ENCODE measurements at regions of chr13 and their contacts with region 1.

Region 1: DNA sequence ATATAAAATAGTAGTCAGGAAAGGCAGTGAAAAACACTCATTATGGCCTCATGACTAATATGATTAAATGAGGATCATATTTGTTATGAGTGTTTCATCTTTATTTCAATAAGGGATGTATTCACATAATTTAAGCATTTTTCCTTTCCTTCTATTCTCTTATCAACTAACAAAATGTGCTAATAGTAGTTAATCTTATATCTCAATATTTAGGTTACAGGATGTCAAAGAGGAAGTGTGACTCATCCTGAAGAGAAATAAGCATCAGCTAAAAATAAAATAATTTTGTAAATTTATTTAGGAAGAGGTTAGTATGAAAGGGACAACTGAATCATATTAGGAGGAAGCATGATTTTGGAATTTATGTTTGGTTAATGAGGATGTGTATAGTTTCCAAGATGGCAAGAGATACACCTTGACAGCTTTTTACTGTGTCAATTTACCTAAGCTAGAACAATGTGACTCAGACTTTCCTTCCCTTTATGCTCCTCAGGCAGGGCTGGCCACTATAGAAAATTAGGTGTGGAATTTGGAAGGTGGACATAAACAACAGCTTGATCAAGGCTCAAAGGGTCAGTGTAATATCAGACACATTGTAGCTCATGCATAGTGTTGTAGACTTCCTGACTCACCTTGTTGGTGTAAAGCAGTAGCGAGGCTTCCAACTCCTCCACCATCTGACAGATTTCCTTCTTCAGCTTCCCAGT is 172.7 kb downstream of the SLITRK1 start:
- DNase-seq: no peak
- ATAC-seq: no peak
- H3K4me3 ChIP-seq: no peak overlapping the region
- H3K27ac ChIP-seq: no peak overlapping the region
- H3K4me1 ChIP-seq: no peaks in the 10 kb centered on the region
- H3K27me3 ChIP-seq: no peaks in the 10 kb centered on the region
- CTCF ChIP-seq: no peak

Region 2: DNA sequence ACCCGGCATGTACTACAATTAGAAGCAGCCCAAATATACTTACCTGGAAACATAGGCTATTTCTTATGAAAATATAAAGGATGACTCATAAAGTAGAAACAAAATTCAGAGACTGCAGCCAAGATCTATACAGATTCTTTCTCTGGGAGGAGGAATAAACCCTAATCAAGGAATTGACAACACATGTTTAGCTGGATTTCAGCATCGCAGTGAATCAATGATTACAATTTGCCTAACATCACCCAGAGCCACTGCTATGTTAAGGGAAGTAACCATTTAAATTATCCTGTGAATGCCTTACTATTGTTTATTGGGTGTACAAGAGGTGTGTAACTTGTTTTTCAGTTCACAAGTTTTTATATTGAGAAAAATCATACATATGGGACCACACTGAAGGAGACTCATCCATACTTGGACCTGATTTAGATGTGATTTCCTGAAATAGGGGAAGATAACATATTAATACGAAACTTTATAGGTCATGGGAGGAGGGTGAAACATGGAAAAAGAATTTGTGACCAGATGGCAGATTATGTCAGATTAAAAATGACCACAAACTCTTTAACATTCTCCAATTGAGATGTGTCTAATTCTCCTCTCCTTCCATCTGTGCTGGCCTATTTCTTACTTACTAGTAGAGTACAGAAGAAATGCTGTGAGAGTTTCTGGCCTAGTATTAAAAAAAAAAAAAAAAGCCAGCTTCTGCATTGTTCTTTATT is 995.7 kb before region 1 on chr13:
- CTCF ChIA-PET with region 1: no interaction called
- POLR2A ChIA-PET with region 1: no interaction called
- in situ Hi-C with region 1: no loop called
- intact Hi-C with region 1: no loop called
- DNase-seq: no peak
- ATAC-seq: no peak
- H3K4me3 ChIP-seq: no peak overlapping the region
- H3K27ac ChIP-seq: no peak overlapping the region
- H3K4me1 ChIP-seq: no peaks in the 10 kb centered on the region
- H3K27me3 ChIP-seq: no peaks in the 10 kb centered on the region
- CTCF ChIP-seq: no peak

Region 3: DNA sequence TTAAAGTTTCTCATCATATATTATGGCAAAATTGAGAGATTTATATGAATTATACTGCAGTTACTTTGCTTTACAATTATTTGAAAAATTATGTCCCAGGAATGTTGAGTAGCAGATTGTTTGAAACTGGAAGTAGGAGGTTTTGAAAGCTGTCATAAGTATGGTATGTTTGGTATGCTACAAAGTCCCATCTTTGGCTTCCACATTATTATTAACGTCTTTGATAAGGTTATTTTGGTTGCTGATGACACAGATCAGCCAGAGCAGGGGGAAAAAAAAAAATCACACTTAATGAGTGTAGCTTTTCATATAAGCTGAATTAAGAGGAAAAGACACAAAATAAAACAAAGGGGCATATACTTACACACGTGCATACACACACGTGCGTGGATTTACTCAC is 42.6 kb after region 1 on chr13:
- CTCF ChIA-PET with region 1: no interaction called
- POLR2A ChIA-PET with region 1: no interaction called
- in situ Hi-C with region 1: no loop called
- intact Hi-C with region 1: loop called (anchors 2 kb)
- DNase-seq: no peak
- ATAC-seq: no peak
- H3K4me3 ChIP-seq: no peak overlapping the region
- H3K27ac ChIP-seq: no peak overlapping the region
- H3K4me1 ChIP-seq: no peaks in the 10 kb centered on the region
- H3K27me3 ChIP-seq: no peaks in the 10 kb centered on the region
- CTCF ChIP-seq: no peak

Region 4: DNA sequence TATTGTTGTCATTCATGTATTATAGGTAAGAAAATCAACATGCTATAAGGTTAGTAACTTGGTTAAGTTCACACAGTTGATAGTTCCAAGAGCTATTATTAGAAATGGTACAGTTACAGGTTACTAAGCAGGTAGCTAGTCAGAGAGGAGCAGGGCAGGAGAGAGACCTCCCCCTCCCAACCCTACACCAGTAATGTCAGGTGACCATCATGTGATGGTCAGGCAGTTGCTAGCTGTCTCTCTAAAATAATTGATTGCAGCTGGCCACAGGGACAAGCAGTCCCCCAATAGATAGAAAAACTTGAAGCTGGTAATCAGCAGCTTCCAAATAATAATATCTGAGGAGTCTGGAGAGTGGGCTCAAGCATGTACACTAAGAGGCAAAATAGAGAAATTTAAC is 158.1 kb after region 1 on chr13:
- CTCF ChIA-PET with region 1: no interaction called
- POLR2A ChIA-PET with region 1: no interaction called
- in situ Hi-C with region 1: no loop called
- intact Hi-C with region 1: no loop called
- DNase-seq: no peak
- ATAC-seq: no peak
- H3K4me3 ChIP-seq: no peak overlapping the region
- H3K27ac ChIP-seq: no peak overlapping the region
- H3K4me1 ChIP-seq: no peaks in the 10 kb centered on the region
- H3K27me3 ChIP-seq: no peaks in the 10 kb centered on the region
- CTCF ChIP-seq: no peak